ENCODE measurements at regions of chr20 and their contacts with region 1.

Region 1: GRCh38 chr20:5714261-5715041 is 35.8 kb upstream of the SHLD1 start:
- DNase-seq: peak; percentile 90 to 98 (median 96)
- H3K4me3 ChIP-seq: peak overlapping the region in 1 of 2 donors; percentile 14
- H3K4me3 Mint-ChIP-seq: peak overlapping the region; percentile 57 to 93 (median 74)
- H3K27ac ChIP-seq: peak overlapping the region; percentile 72
- H3K27ac Mint-ChIP-seq: peak overlapping the region; percentile 88 to 100 (median 99)
- H3K4me1 ChIP-seq: peaks cover 33% of the 10 kb centered on the region
- H3K4me1 Mint-ChIP-seq: peaks cover 32 to 46% (median 37%) of the 10 kb centered on the region in 4 donors
- H3K27me3 ChIP-seq: no peaks in the 10 kb centered on the region
- H3K27me3 Mint-ChIP-seq: peaks cover 0 to 2% of the 10 kb centered on the region in 2 donors

Region 2: DNA sequence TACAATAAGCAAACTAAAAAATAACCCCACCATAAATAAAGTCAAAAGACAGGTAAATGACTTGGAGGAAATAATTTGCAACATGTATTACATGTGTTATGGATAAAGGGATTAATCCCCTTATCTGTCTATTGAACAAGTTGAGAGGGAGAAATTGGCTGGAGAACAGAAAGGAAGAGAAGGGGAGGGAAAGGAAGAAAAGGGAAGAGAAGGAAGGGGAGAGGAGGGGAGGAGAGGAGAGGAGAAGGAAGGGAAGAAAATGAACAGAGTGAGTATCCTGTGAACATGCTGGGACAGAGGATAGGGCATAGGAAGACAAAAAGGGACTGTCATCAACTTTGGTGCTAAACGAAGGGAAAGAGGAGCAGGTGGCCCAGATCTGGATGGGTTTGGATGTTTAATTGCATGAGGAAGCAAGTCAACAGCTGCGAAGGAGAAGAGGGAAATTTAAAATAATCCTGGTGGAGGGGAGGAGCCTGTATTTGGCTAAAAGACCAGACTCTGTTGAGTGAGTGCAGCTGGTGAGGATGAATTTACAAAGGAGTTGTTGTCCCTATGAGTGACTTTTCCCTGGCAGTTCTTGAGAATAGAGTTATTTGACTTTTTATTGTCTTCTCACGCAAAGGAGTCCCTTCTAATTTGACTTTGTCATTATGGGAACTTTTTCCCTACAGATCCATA is 21.5 kb after region 1 on chr20:
- CTCF ChIA-PET with region 1: interaction called, 4 read pairs
- POLR2A ChIA-PET with region 1: interaction called, 14 read pairs
- intact Hi-C with region 1: loop called (anchors 1 kb)
- DNase-seq: no peak
- H3K4me3 ChIP-seq: no peak overlapping the region
- H3K4me3 Mint-ChIP-seq: peak overlapping the region in 4 of 8 donors; percentile 15 to 57 (median 44)
- H3K27ac ChIP-seq: no peak overlapping the region
- H3K27ac Mint-ChIP-seq: peak overlapping the region; percentile 82 to 98 (median 96)
- H3K4me1 ChIP-seq: peaks cover 33% of the 10 kb centered on the region
- H3K4me1 Mint-ChIP-seq: peaks cover 20 to 42% (median 34%) of the 10 kb centered on the region in 4 donors
- H3K27me3 ChIP-seq: no peaks in the 10 kb centered on the region
- H3K27me3 Mint-ChIP-seq: no peaks in the 10 kb centered on the region

Region 3: GRCh38 chr20:5749952-5750779 is 35.7 kb after region 1 on chr20 and contains the start of gene SHLD1:
- CTCF ChIA-PET with region 1: interaction called, 13 read pairs
- POLR2A ChIA-PET with region 1: interaction called, 41 read pairs
- intact Hi-C with region 1: loop called (anchors 1 kb)
- DNase-seq: peak; percentile 75 to 83 (median 81)
- H3K4me3 ChIP-seq: peak within 1 kb of the TSS; percentile 70 to 96
- H3K4me3 Mint-ChIP-seq: peak within 1 kb of the TSS; percentile 87 to 100 (median 96)
- H3K27ac ChIP-seq: peak within 1 kb of the TSS; percentile 69
- H3K27ac Mint-ChIP-seq: peak within 1 kb of the TSS; percentile 92 to 99 (median 98)
- H3K4me1 ChIP-seq: peaks cover 28% of the 10 kb centered on the region
- H3K4me1 Mint-ChIP-seq: peaks cover 16 to 34% (median 23%) of the 10 kb centered on the region in 4 donors
- H3K27me3 ChIP-seq: no peaks in the 10 kb centered on the region
- H3K27me3 Mint-ChIP-seq: no peaks in the 10 kb centered on the region
- total RNA-seq, gene SHLD1: 13.6 to 16.3 TPM

Region 4: GRCh38 chr20:5766085-5766764 is 51.8 kb after region 1 on chr20:
- CTCF ChIA-PET with region 1: no interaction called
- POLR2A ChIA-PET with region 1: interaction called, 11 read pairs
- intact Hi-C with region 1: no loop called
- DNase-seq: no peak
- H3K4me3 ChIP-seq: no peak overlapping the region
- H3K4me3 Mint-ChIP-seq: no peak overlapping the region
- H3K27ac ChIP-seq: no peak overlapping the region
- H3K27ac Mint-ChIP-seq: peak overlapping the region in 3 of 7 donors; percentile 5 to 58 (median 9)
- H3K4me1 ChIP-seq: peaks cover 11% of the 10 kb centered on the region
- H3K4me1 Mint-ChIP-seq: peaks cover 27 to 32% (median 29%) of the 10 kb centered on the region in 4 donors
- H3K27me3 ChIP-seq: no peaks in the 10 kb centered on the region
- H3K27me3 Mint-ChIP-seq: no peaks in the 10 kb centered on the region

Region 5: DNA sequence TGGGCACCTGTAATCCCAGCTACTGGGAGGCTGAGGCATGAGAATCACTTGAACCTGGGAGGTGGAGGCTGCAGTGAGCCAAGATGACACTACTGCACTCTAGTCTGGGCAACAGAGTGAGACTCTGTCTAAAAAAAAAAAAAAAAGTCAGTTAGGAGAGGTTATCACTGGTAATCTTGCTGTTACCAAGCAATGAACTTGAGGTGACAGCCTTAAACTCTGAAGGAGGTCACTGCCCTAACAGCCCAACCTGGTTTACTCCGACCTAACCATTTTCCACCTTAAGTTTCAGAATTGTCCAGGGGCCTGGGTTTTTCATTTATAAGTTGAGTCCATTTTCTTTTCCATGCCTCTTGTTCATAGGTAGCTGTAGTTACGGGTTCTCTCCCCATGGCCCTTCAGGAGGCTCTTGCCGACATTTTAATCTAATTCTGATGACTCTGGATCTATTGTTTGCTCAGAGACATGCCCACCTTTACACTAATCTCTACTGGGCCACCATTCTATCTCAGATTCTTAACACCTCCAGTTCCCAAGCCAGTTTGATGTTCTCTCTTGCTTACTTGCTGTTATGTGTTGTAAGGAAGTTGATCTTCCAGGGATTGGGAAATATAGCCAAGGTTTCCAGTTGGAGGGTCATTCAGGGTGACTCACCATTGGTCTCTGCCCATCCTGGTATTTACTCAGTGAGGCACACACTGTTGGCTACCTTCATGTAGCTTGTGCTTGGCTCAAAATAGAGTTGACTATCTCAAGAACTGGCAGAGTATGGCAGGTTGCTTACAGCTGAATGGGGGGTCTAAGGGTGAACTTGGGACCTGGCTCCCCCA is 64.8 kb after region 1 on chr20:
- CTCF ChIA-PET with region 1: no interaction called
- POLR2A ChIA-PET with region 1: no interaction called
- intact Hi-C with region 1: no loop called
- DNase-seq: no peak
- H3K4me3 ChIP-seq: no peak overlapping the region
- H3K4me3 Mint-ChIP-seq: no peak overlapping the region
- H3K27ac ChIP-seq: no peak overlapping the region
- H3K27ac Mint-ChIP-seq: peak overlapping the region in 4 of 7 donors; percentile 1 to 76 (median 15)
- H3K4me1 ChIP-seq: peaks cover 5% of the 10 kb centered on the region
- H3K4me1 Mint-ChIP-seq: peaks cover 5 to 13% (median 9%) of the 10 kb centered on the region in 4 donors
- H3K27me3 ChIP-seq: no peaks in the 10 kb centered on the region
- H3K27me3 Mint-ChIP-seq: no peaks in the 10 kb centered on the region

Region 6: DNA sequence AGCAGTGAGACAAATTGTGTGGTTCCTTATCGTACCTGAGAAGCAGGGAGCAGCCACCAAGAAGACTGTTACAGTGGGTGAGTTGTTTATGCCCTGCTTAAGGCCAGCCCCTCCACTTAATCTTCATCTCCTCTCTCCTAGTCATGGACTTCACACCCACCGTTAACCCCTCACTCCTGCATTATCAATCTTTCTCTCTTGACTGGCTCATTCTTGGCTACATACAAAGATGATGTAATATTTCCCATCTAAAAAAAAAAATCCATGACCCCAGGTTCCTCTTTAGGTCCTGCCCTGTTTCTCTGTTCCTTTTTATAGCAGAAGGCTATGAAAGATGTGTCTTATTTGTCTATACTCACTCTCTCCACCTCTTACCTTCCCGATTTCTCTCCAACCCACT is 108.1 kb after region 1 on chr20:
- CTCF ChIA-PET with region 1: no interaction called
- POLR2A ChIA-PET with region 1: no interaction called
- intact Hi-C with region 1: no loop called
- DNase-seq: no peak
- H3K4me3 ChIP-seq: no peak overlapping the region
- H3K4me3 Mint-ChIP-seq: no peak overlapping the region
- H3K27ac ChIP-seq: no peak overlapping the region
- H3K27ac Mint-ChIP-seq: peak overlapping the region in 3 of 7 donors; percentile 57 to 68 (median 61)
- H3K4me1 ChIP-seq: no peaks in the 10 kb centered on the region
- H3K4me1 Mint-ChIP-seq: peaks cover 13 to 23% (median 15%) of the 10 kb centered on the region in 4 donors
- H3K27me3 ChIP-seq: no peaks in the 10 kb centered on the region
- H3K27me3 Mint-ChIP-seq: no peaks in the 10 kb centered on the region

Region 7: DNA sequence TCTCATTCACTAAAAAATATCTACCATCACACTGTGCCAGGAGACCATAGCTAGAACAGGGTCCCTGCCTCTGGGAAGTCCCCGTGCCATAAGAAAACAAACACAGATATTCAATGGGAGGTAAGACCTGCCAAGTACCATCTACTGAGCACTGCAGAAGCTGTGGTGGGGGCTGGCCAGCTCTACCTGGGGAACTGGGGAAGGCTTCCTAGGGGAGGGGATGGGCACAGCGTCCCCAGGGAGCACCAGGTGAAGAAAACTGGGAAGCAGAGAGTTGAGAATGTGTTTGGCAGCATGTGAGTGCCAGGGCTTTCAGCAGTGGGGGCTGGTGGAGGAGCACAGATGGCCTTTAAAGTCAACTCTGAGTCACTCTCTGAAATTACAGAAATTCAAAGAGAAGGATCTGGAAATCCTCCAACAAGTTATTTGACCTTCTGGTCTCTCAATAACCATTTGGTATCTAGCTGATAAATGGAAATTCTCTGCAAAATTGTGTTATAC is 120.9 kb after region 1 on chr20:
- CTCF ChIA-PET with region 1: no interaction called
- POLR2A ChIA-PET with region 1: interaction called, 4 read pairs
- intact Hi-C with region 1: loop called (anchors 1 kb)
- DNase-seq: peak in 1 of 5 donors; percentile 62
- H3K4me3 ChIP-seq: no peak overlapping the region
- H3K4me3 Mint-ChIP-seq: peak overlapping the region; percentile 12 to 89 (median 74)
- H3K27ac ChIP-seq: peak overlapping the region; percentile 91
- H3K27ac Mint-ChIP-seq: peak overlapping the region; percentile 96 to 100 (median 98)
- H3K4me1 ChIP-seq: peaks cover 33% of the 10 kb centered on the region
- H3K4me1 Mint-ChIP-seq: peaks cover 39 to 48% (median 43%) of the 10 kb centered on the region in 4 donors
- H3K27me3 ChIP-seq: no peaks in the 10 kb centered on the region
- H3K27me3 Mint-ChIP-seq: no peaks in the 10 kb centered on the region